PC-9 (cell line): ENCODE measurements at regions of chr3 and their contacts with region 1.

Region 1: GRCh38 chr3:119145500-119146191 is at the start of gene TEX55:
- DNase-seq: peak in 1 of 2 experiments; percentile 35
- H3K4me3 ChIP-seq: no peak within 1 kb of the TSS
- H3K27ac ChIP-seq: no peak within 1 kb of the TSS
- H3K4me1 ChIP-seq: peaks cover 18% of the 10 kb centered on the region; the same call in 1 of the 2 replicates
- H3K27me3 ChIP-seq: no peaks in the 10 kb centered on the region
- CTCF ChIP-seq: peak; percentile 64
- total RNA-seq, gene TEX55: not detected in 2 replicates

Region 2: GRCh38 chr3:118729546-118729945 is 416.1 kb before region 1 on chr3:
- CTCF ChIA-PET with region 1: no interaction called
- POLR2A ChIA-PET with region 1: no interaction called
- intact Hi-C with region 1: no loop called
- DNase-seq: no peak
- H3K4me3 ChIP-seq: no peak overlapping the region
- H3K27ac ChIP-seq: no peak overlapping the region
- H3K4me1 ChIP-seq: no peaks in the 10 kb centered on the region
- H3K27me3 ChIP-seq: no peaks in the 10 kb centered on the region
- CTCF ChIP-seq: no peak

Region 3: GRCh38 chr3:119184796-119185570 is 39.3 kb after region 1 on chr3:
- CTCF ChIA-PET with region 1: no interaction called
- POLR2A ChIA-PET with region 1: no interaction called
- intact Hi-C with region 1: loop called (anchors 1 kb)
- DNase-seq: peak; percentile 31 to 92
- H3K4me3 ChIP-seq: no peak overlapping the region
- H3K27ac ChIP-seq: peak overlapping the region; percentile 89
- H3K4me1 ChIP-seq: peaks cover 57% of the 10 kb centered on the region
- H3K27me3 ChIP-seq: no peaks in the 10 kb centered on the region
- CTCF ChIP-seq: no peak

Region 4: GRCh38 chr3:119206611-119207511 is 61.2 kb after region 1 on chr3:
- CTCF ChIA-PET with region 1: no interaction called
- POLR2A ChIA-PET with region 1: no interaction called
- intact Hi-C with region 1: loop called (anchors 1 kb)
- DNase-seq: no peak
- H3K4me3 ChIP-seq: no peak overlapping the region
- H3K27ac ChIP-seq: no peak overlapping the region
- H3K4me1 ChIP-seq: no peaks in the 10 kb centered on the region
- H3K27me3 ChIP-seq: no peaks in the 10 kb centered on the region
- CTCF ChIP-seq: no peak

Region 5: DNA sequence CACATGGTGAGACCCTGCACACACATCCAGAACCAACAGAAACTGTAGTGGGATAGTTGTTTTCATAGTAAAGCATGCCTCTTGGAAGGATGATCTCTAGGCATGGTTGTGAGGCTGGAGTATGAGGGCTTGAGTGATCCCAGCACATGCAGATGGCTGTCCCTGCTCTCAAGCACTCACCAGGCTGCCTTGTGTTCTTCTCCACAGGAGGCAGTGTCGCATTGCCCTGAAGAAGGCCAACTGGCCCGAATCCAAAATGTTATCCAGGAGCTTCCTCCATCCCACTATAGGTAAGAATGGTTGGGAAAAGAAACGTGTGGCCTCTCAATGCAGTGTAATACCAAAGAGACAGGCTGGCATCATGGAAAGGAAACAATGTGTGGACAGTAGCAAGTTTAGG is 235.1 kb after region 1 on chr3:
- CTCF ChIA-PET with region 1: no interaction called
- POLR2A ChIA-PET with region 1: no interaction called
- intact Hi-C with region 1: loop called (anchors 10 kb)
- DNase-seq: no peak
- H3K4me3 ChIP-seq: no peak overlapping the region
- H3K27ac ChIP-seq: no peak overlapping the region
- H3K4me1 ChIP-seq: no peaks in the 10 kb centered on the region
- H3K27me3 ChIP-seq: no peaks in the 10 kb centered on the region
- CTCF ChIP-seq: no peak